ENCODE measurements at regions of chrX and their contacts with region 1.

Region 1: GRCh38 chrX:48648336-48648751 is 35.3 kb upstream of the WAS start:
- DNase-seq: peak; percentile 5 to 74 (median 21)
- ATAC-seq: peak; percentile 78
- H3K4me3 ChIP-seq: no peak overlapping the region
- H3K4me3 Mint-ChIP-seq: no peak overlapping the region
- H3K27ac ChIP-seq: no peak overlapping the region
- H3K27ac Mint-ChIP-seq: no peak overlapping the region
- H3K4me1 ChIP-seq: peaks cover 3% of the 10 kb centered on the region
- H3K4me1 Mint-ChIP-seq: peaks cover 7% of the 10 kb centered on the region
- H3K27me3 ChIP-seq: no peaks in the 10 kb centered on the region
- H3K27me3 Mint-ChIP-seq: no peaks in the 10 kb centered on the region
- CTCF ChIP-seq: peak; percentile 51

Region 2: GRCh38 chrX:48696301-48697181 is 48.2 kb after region 1 on chrX and contains the start of gene SUV39H1:
- CTCF ChIA-PET with region 1: no interaction called
- POLR2A ChIA-PET with region 1: no interaction called
- intact Hi-C with region 1: no loop called
- DNase-seq: peak; percentile 66 to 95 (median 80)
- ATAC-seq: peak; percentile 93
- H3K4me3 ChIP-seq: peak within 1 kb of the TSS; percentile 65
- H3K4me3 Mint-ChIP-seq: peak within 1 kb of the TSS; percentile 98
- H3K27ac ChIP-seq: peak within 1 kb of the TSS; percentile 72 to 75
- H3K27ac Mint-ChIP-seq: peak within 1 kb of the TSS; percentile 98
- H3K4me1 ChIP-seq: peaks cover 17% of the 10 kb centered on the region
- H3K4me1 Mint-ChIP-seq: peaks cover 24% of the 10 kb centered on the region
- H3K27me3 ChIP-seq: no peaks in the 10 kb centered on the region
- H3K27me3 Mint-ChIP-seq: no peaks in the 10 kb centered on the region
- CTCF ChIP-seq: no peak
- total RNA-seq, gene SUV39H1: 7.7 to 8.4 TPM

Region 3: DNA sequence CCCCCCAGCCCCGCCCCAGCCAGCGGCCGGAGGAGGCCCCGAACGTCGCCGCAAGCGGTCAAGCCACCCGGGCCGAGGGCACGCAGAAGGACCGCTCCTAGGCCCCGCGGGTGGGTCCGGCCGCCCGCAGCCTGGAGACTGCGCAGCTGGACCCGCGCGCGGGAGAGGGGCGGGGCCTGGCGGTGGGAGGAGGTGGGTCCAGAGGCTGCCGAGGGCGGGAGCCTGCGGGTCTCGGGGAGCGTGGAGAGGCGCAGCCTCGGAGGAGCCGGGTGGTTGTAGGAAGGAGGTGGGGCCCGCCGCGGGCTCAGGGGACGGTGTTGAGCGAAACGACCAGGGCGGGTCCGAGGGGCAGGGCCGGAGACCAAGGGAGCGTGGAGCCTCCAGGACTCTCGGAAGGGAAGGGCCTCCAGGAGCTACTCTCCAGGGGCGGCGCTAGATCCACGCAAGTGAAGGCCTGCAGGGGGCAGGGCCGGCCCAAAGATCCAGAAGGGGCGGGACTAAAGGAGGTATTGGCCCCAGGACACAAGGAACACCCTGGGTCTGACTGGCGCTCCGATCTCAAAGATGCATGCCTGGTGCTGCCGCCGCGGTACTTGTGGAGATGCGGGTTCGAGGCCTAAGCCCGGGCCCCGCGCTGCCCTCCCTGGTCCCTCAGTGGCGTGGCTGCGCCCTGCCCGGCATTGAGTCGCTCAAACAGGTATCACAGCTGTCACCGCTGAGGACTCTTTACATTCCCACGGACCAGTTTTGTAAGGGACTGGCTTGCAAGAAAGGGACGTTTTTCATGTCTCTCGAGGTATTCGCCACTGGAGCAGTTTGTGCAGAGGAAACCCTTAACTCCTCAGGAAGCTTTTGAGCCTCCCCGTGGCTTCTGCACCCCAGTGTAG is 243.3 kb after region 1 on chrX:
- CTCF ChIA-PET with region 1: interaction called, 11 read pairs
- POLR2A ChIA-PET with region 1: interaction called, 7 read pairs
- intact Hi-C with region 1: loop called in 1 of 2 experiments (anchors 2 kb)
- DNase-seq: peak; percentile 52 to 90 (median 72)
- ATAC-seq: peak; percentile 88
- H3K4me3 ChIP-seq: peak overlapping the region; percentile 60
- H3K4me3 Mint-ChIP-seq: peak overlapping the region; percentile 86
- H3K27ac ChIP-seq: peak overlapping the region in 1 of 2 donors; percentile 29
- H3K27ac Mint-ChIP-seq: peak overlapping the region; percentile 71
- H3K4me1 ChIP-seq: peaks cover 27% of the 10 kb centered on the region
- H3K4me1 Mint-ChIP-seq: peaks cover 26% of the 10 kb centered on the region
- H3K27me3 ChIP-seq: no peaks in the 10 kb centered on the region
- H3K27me3 Mint-ChIP-seq: no peaks in the 10 kb centered on the region
- CTCF ChIP-seq: peak; percentile 40

Region 4: DNA sequence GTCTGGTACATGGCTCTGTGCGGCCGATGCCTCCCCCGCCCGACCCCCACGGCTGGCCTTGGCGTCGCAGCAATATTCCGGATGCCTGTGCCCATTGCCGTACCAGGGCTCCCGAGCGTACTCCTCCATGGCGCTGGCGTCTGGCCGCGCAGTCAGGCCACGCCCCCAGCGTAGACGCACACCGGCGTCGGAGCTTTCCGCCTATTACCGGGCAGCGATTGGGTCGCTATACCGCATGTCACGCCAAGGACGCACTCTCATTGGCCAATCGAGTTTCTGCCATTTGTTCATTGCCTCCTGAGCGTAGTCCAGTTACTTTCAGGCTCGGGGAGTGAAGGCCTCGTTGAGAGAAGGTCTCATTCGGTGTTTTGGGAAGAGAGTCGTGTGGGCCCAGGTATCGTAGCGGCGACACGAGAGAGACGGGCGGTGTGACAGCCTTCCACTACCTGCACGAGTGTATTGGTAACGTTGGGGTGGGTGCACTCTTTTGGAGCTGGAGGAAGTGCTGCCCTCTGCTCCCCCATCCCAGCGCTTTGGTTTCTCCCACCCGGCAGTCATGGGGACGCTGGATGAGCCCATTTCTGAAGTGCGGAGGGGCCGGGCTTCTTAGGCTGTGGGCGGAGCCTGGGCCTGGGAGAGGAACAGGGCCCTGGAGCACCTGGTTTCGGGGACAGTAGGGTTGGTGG is 249.4 kb after region 1 on chrX and contains the starts of genes PQBP1 and TIMM17B:
- CTCF ChIA-PET with region 1: no interaction called
- POLR2A ChIA-PET with region 1: interaction called, 9 read pairs
- intact Hi-C with region 1: loop called in 1 of 2 experiments (anchors 2 kb)
- DNase-seq: peak; percentile 73 to 96 (median 84)
- ATAC-seq: peak; percentile 84
- H3K4me3 ChIP-seq: peak within 1 kb of the TSS; percentile 91
- H3K4me3 Mint-ChIP-seq: peak within 1 kb of the TSS; percentile 91
- H3K27ac ChIP-seq: peak within 1 kb of the TSS; percentile 93 to 98
- H3K27ac Mint-ChIP-seq: peak within 1 kb of the TSS; percentile 90
- H3K4me1 ChIP-seq: peaks cover 33% of the 10 kb centered on the region
- H3K4me1 Mint-ChIP-seq: peaks cover 27% of the 10 kb centered on the region
- H3K27me3 ChIP-seq: no peaks in the 10 kb centered on the region
- H3K27me3 Mint-ChIP-seq: no peaks in the 10 kb centered on the region
- CTCF ChIP-seq: no peak
- total RNA-seq, gene PQBP1: 73.0 to 76.6 TPM
- total RNA-seq, gene TIMM17B: 40.0 to 40.3 TPM

Region 5: DNA sequence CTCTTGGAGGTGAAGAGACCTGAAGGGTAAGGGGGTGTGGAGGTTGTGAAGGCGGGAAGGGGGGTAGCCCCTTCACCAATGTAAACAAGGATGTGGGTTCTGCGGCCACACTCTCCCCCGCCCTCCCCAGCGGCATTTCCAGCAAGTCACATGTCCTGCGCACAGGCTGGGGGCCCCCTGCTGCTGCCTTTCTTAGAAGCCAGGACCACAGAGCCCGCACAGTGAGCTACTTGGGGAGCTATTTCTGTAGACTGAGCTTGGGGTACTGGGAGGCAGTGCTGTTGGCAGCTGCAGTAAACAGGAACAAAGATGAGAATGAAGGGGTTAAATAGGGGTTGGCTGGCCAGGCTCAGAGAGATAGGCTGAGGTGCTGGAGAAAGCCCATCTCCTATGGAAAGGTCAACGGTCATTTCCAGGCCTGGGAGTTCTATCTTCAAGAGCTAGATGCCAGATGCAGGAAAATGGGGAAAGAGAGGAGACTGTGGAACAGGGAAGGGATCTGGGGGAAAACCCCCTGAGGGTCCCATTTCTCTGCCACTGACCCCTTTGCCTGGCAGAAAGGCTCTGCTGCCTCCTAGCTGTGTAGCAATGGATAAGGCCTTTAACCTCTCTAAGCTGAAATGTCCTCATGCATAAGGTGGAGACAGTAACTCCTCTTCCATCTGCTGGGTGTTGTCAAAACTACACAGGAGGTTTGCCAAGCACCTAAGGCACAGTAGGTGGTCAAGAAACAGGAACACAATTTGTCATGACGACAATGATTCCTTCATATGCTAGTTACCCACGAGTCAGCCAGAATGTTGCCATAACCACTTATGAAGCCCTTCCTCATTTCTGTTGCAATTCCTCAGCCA is 288.9 kb after region 1 on chrX:
- CTCF ChIA-PET with region 1: no interaction called
- POLR2A ChIA-PET with region 1: interaction called, 4 read pairs
- intact Hi-C with region 1: loop called in 1 of 2 experiments (anchors 5 kb)
- DNase-seq: peak; percentile 77 to 94 (median 88)
- ATAC-seq: peak; percentile 68
- H3K4me3 ChIP-seq: peak overlapping the region; percentile 49
- H3K4me3 Mint-ChIP-seq: peak overlapping the region; percentile 82
- H3K27ac ChIP-seq: peak overlapping the region; percentile 92 to 93
- H3K27ac Mint-ChIP-seq: peak overlapping the region; percentile 98
- H3K4me1 ChIP-seq: peaks cover 85% of the 10 kb centered on the region
- H3K4me1 Mint-ChIP-seq: peaks cover 90% of the 10 kb centered on the region
- H3K27me3 ChIP-seq: no peaks in the 10 kb centered on the region
- H3K27me3 Mint-ChIP-seq: no peaks in the 10 kb centered on the region
- CTCF ChIP-seq: peak; percentile 40

Region 6: GRCh38 chrX:48945516-48946348 is 297.4 kb after region 1 on chrX:
- CTCF ChIA-PET with region 1: no interaction called
- POLR2A ChIA-PET with region 1: no interaction called
- intact Hi-C with region 1: loop called in 1 of 2 experiments (anchors 2 kb)
- DNase-seq: peak; percentile 30 to 75 (median 52)
- ATAC-seq: peak; percentile 67
- H3K4me3 ChIP-seq: no peak overlapping the region
- H3K4me3 Mint-ChIP-seq: no peak overlapping the region
- H3K27ac ChIP-seq: peak overlapping the region in 1 of 2 donors; percentile 22
- H3K27ac Mint-ChIP-seq: peak overlapping the region; percentile 74
- H3K4me1 ChIP-seq: peaks cover 74% of the 10 kb centered on the region
- H3K4me1 Mint-ChIP-seq: peaks cover 49% of the 10 kb centered on the region
- H3K27me3 ChIP-seq: no peaks in the 10 kb centered on the region
- H3K27me3 Mint-ChIP-seq: no peaks in the 10 kb centered on the region
- CTCF ChIP-seq: peak; percentile 71